Heart left ventricle (tissue), 16 donors: ENCODE measurements at regions of chr7 and their contacts with region 1.

Region 1: DNA sequence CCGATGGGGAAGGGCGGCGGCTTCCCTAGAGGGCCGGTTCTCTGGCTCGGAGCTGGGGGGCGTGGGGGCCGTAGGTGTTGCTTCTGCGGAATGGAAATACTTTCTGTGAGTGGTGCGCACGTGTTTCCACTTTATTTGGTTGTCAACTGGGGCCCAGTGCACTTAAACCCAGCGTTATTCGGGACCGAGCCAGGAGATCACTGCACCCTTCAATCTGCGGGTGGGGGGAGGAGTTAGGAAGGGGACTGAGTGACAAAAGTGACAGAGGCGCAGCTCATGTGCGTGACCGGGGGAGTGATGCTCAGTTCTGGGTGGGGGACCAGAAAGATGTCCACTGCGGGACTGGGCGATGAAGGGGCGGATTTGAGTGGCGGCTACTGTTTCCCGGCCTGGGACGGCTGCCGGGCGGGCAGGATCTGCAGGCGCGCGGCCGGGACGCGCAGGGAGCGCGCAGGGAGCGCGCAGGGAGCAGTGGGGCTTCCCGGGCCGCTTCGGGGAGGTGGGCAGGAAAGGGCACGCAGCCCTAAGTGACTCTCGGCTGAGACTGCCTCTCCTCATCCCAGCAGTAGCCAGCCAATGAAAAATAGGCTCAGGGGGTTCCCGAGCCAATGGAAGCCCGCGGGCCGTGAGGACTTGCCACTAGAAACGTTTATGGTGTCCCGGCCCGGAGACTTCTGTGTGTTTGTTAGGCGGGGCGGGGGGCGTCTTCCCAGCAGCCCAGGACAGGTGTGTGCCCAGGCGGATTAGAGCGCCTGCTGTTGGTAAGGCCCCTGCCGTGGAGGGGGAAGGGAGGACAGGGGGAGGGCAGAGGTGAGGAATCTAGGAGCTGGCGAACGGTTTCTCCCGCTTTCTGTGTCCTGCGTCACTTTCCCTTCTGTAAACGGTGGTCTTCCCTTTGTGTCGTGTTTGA is 54.3 kb upstream of the KDM7A start:
- DNase-seq: peak in 4 of 5 donors; percentile 34 to 64 (median 56)
- ATAC-seq: peak; percentile 19 to 80 (median 72)
- H3K4me3 ChIP-seq: peak overlapping the region; percentile 16 to 68 (median 54)
- H3K27ac ChIP-seq: peak overlapping the region in 9 of 12 donors; percentile 10 to 84 (median 47)
- H3K4me1 ChIP-seq: peaks cover 0 to 41% (median 10%) of the 10 kb centered on the region in 12 donors
- H3K27me3 ChIP-seq: peaks cover 0 to 7% (median 0%) of the 10 kb centered on the region in 9 donors
- CTCF ChIP-seq: no peak
- POLR2A ChIP-seq: no peak

Region 2: GRCh38 chr7:140196361-140197217 is 34.5 kb before region 1 on chr7:
- intact Hi-C with region 1: loop called in 1 of 10 experiments (anchors 5 kb)
- DNase-seq: peak in 1 of 5 donors; percentile 38
- ATAC-seq: peak in 2 of 4 donors; percentile 20 to 57
- H3K4me3 ChIP-seq: no peak overlapping the region
- H3K27ac ChIP-seq: peak overlapping the region in 1 of 12 donors; percentile 32
- H3K4me1 ChIP-seq: peaks cover 0 to 13% (median 1%) of the 10 kb centered on the region in 12 donors
- H3K27me3 ChIP-seq: no peaks in the 10 kb centered on the region
- CTCF ChIP-seq: no peak
- POLR2A ChIP-seq: no peak

Region 3: GRCh38 chr7:140304191-140304799 is 73.2 kb after region 1 on chr7:
- intact Hi-C with region 1: loop called in 2 of 10 experiments (anchors 5 to 10 kb)
- DNase-seq: no peak
- ATAC-seq: peak in 3 of 4 donors; percentile 56 to 83 (median 70)
- H3K4me3 ChIP-seq: no peak overlapping the region
- H3K27ac ChIP-seq: no peak overlapping the region
- H3K4me1 ChIP-seq: peaks cover 0 to 13% (median 0%) of the 10 kb centered on the region in 12 donors
- H3K27me3 ChIP-seq: no peaks in the 10 kb centered on the region
- CTCF ChIP-seq: peak; percentile 33 to 59 (median 50)
- POLR2A ChIP-seq: no peak